Natural killer cell (primary cell): ENCODE measurements at regions of chr14 and their contacts with region 1.

Region 1: GRCh38 chr14:34678306-34678705 is 36.1 kb downstream of the CFL2 start:
- DNase-seq: no peak
- ATAC-seq: no peak
- H3K4me3 ChIP-seq: no peak overlapping the region
- H3K4me3 Mint-ChIP-seq: no peak overlapping the region
- H3K27ac ChIP-seq: no peak overlapping the region
- H3K27ac Mint-ChIP-seq: no peak overlapping the region
- H3K4me1 ChIP-seq: no peaks in the 10 kb centered on the region
- H3K4me1 Mint-ChIP-seq: no peaks in the 10 kb centered on the region
- H3K27me3 ChIP-seq: no peaks in the 10 kb centered on the region
- H3K27me3 Mint-ChIP-seq: peaks cover 0 to 4% of the 10 kb centered on the region in 2 donors
- CTCF ChIP-seq: no peak

Region 2: DNA sequence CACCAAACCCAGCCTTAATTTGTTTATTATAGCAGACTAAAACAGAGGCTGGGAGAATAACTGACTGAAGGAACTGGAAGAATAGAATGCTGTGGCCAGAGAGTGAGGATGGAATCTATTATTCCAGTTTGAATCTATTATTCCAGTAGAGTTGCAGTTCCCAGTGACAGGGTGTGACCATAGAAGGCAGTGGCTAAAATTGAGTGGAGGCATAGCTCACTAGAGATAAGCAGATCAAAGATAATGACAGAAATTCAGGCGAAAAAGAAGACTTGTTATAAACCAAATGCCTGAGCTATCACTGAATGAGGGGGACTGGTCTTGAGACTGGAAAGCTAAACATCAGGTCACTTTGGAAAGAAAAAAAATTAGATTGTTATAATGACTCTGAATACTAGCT is 22.3 kb before region 1 on chr14:
- intact Hi-C with region 1: no loop called
- DNase-seq: no peak
- ATAC-seq: no peak
- H3K4me3 ChIP-seq: no peak overlapping the region
- H3K4me3 Mint-ChIP-seq: no peak overlapping the region
- H3K27ac ChIP-seq: no peak overlapping the region
- H3K27ac Mint-ChIP-seq: no peak overlapping the region
- H3K4me1 ChIP-seq: no peaks in the 10 kb centered on the region
- H3K4me1 Mint-ChIP-seq: no peaks in the 10 kb centered on the region
- H3K27me3 ChIP-seq: no peaks in the 10 kb centered on the region
- H3K27me3 Mint-ChIP-seq: no peaks in the 10 kb centered on the region
- CTCF ChIP-seq: no peak

Region 3: GRCh38 chr14:34912178-34912577 is 233.9 kb after region 1 on chr14:
- intact Hi-C with region 1: loop called (anchors 10 kb)
- DNase-seq: peak in 1 of 2 donors; percentile 28
- ATAC-seq: no peak
- H3K4me3 ChIP-seq: no peak overlapping the region
- H3K4me3 Mint-ChIP-seq: no peak overlapping the region
- H3K27ac ChIP-seq: no peak overlapping the region
- H3K27ac Mint-ChIP-seq: no peak overlapping the region
- H3K4me1 ChIP-seq: no peaks in the 10 kb centered on the region
- H3K4me1 Mint-ChIP-seq: no peaks in the 10 kb centered on the region
- H3K27me3 ChIP-seq: no peaks in the 10 kb centered on the region
- H3K27me3 Mint-ChIP-seq: no peaks in the 10 kb centered on the region
- CTCF ChIP-seq: no peak